Dorsolateral prefrontal cortex (tissue), 120 donors: ENCODE measurements at regions of chr18 and their contacts with region 1.

Region 1: DNA sequence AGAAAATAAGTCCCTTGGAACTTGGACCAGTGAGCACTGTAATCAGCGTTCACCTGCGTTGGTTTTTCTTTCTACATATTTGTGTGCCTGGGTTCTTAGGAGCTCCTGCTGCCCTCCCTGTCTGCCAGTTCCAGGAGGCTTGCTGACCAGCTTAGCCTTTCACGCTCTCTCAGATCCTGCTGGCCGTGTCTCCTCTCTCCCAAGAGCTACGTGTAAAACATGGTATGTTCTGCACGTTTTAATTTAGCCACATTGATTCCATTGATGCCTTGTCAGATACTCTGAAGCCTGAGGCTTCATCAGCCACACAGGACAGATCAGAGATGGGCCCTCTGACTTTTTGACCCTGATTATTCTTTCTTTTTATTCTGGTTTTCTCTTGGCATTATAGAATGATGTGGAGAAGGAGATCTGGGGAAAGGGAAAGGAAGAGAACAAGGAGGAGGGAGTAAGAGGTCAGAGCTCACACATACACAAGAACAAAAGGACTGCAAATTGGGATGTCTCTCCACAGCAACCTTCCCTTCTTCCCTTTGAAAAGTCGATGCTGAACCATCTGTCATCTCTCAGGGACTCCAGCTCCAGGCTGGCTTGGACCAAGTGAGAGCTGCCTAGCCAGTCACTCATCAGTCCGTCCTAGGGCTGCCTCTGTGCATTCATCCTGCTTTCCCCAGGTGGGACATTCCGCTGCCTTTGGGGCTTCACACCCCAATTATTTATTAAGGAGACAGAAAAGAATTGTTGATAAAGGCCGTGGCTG is 152.8 kb downstream of the PIK3C3 start:
- DNase-seq: peak in 1 of 10 donors; percentile 74
- H3K4me3 ChIP-seq: no peak overlapping the region
- H3K27ac ChIP-seq: peak overlapping the region in 1 of 59 donors; percentile 75
- H3K27me3 ChIP-seq: no peaks in the 10 kb centered on the region
- CTCF ChIP-seq: no peak

Region 2: GRCh38 chr18:41917181-41917580 is 190.7 kb before region 1 on chr18:
- intact Hi-C with region 1: no loop called
- DNase-seq: no peak
- H3K4me3 ChIP-seq: no peak overlapping the region
- H3K27ac ChIP-seq: no peak overlapping the region
- H3K27me3 ChIP-seq: peaks cover 0 to 7% (median 0%) of the 10 kb centered on the region in 45 donors
- CTCF ChIP-seq: no peak

Region 3: DNA sequence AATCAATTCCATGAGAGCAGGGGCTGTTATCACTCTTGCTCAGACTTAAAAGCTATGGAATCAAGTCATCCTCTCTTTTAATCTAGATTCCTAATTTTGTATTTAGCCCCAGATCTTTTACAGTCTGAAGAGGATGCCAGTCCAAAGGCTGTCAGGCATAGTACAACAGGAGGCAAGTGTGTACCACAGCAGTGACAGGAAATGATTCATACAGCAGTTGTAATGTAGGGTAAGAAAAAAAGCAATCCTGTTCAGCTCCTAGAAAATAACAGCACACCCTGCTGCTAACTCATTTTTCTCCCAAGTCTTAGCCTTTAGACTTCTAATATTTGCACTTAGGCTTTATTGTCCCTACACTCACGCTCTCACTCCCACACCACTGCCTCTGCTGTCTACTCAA is 1297.2 kb after region 1 on chr18:
- intact Hi-C with region 1: loop called in 1 of 2 experiments (anchors 10 kb)
- DNase-seq: no peak
- H3K4me3 ChIP-seq: no peak overlapping the region
- H3K27ac ChIP-seq: no peak overlapping the region
- H3K27me3 ChIP-seq: no peaks in the 10 kb centered on the region
- CTCF ChIP-seq: no peak